ENCODE measurements at regions of chr7 and their contacts with region 1.

Region 1: GRCh38 chr7:155205368-155206317 is 92.0 kb upstream of the INSIG1 start:
- DNase-seq: peak; percentile 96
- H3K4me3 Mint-ChIP-seq: peak overlapping the region; percentile 75
- H3K27ac Mint-ChIP-seq: peak overlapping the region; percentile 100
- H3K4me1 Mint-ChIP-seq: peaks cover 45% of the 10 kb centered on the region
- H3K27me3 Mint-ChIP-seq: no peaks in the 10 kb centered on the region

Region 2: GRCh38 chr7:155003376-155004214 is 202.0 kb before region 1 on chr7:
- CTCF ChIA-PET with region 1: no interaction called
- POLR2A ChIA-PET with region 1: interaction called, 3 read pairs
- intact Hi-C with region 1: loop called (anchors 1 kb)
- DNase-seq: peak; percentile 89
- H3K4me3 Mint-ChIP-seq: peak overlapping the region; percentile 89
- H3K27ac Mint-ChIP-seq: peak overlapping the region; percentile 91
- H3K4me1 Mint-ChIP-seq: peaks cover 12% of the 10 kb centered on the region
- H3K27me3 Mint-ChIP-seq: no peaks in the 10 kb centered on the region

Region 3: GRCh38 chr7:155190688-155191087 is 15.0 kb before region 1 on chr7:
- CTCF ChIA-PET with region 1: interaction called, 20 read pairs
- POLR2A ChIA-PET with region 1: no interaction called
- intact Hi-C with region 1: loop called (anchors 1 kb)
- DNase-seq: peak; percentile 76
- H3K4me3 Mint-ChIP-seq: no peak overlapping the region
- H3K27ac Mint-ChIP-seq: no peak overlapping the region
- H3K4me1 Mint-ChIP-seq: peaks cover 28% of the 10 kb centered on the region
- H3K27me3 Mint-ChIP-seq: peaks cover 4% of the 10 kb centered on the region

Region 4: GRCh38 chr7:155283565-155284194 is 78.0 kb after region 1 on chr7:
- CTCF ChIA-PET with region 1: interaction called, 3 read pairs
- POLR2A ChIA-PET with region 1: no interaction called
- intact Hi-C with region 1: loop called (anchors 1 kb)
- DNase-seq: peak; percentile 61
- H3K4me3 Mint-ChIP-seq: no peak overlapping the region
- H3K27ac Mint-ChIP-seq: peak overlapping the region; percentile 58
- H3K4me1 Mint-ChIP-seq: peaks cover 44% of the 10 kb centered on the region
- H3K27me3 Mint-ChIP-seq: peaks cover 24% of the 10 kb centered on the region

Region 5: DNA sequence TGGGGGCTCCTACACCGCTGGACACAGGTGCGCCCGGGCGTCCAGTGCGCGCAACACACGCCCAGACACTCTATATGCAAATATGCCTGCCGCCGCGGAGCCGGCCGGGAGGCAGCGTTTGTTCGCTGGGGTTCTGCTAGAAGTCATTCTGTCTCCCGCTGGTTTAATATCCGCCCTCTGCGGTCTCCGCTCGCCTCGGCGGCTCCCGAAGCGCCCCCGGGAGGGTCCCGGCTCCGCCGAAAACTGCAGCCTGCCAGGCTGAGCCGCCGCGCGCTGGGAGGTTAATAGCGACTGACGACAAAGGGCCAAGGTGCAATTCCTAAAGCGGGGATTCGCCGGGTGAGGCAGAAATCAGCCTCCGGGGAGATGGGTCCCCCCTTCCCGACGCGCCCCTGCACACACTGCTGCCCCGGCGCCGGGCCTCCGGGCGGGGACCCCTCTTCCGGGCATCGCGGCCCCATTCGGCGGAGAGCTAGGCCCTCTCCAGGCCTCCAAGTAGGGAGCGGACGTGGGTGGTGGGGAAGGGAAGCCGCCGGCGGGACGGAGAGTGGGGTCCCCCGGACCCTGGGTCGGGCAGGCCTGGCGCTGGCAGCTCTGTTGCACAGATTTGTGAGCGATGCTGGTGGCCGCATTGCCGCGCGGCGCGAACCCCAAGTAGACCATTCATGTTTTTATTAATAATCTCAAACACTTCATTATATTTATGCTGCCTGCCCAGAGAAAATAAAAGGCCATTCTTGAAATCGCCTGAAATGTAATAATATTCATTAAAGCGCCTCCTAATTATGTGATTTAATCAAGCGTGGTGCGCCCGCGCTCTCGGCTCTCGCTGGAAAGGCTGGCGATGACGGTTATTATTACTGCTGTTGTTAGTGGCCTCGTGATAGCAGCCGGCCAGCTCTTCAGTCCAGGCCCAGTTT is 261.4 kb after region 1 on chr7:
- CTCF ChIA-PET with region 1: no interaction called
- POLR2A ChIA-PET with region 1: no interaction called
- intact Hi-C with region 1: no loop called
- DNase-seq: peak; percentile 59
- H3K4me3 Mint-ChIP-seq: no peak overlapping the region
- H3K27ac Mint-ChIP-seq: no peak overlapping the region
- H3K4me1 Mint-ChIP-seq: peaks cover 19% of the 10 kb centered on the region
- H3K27me3 Mint-ChIP-seq: peaks cover 77% of the 10 kb centered on the region